GM13977 (cell line): ENCODE measurements at regions of chr9 and their contacts with region 1.

Region 1: DNA sequence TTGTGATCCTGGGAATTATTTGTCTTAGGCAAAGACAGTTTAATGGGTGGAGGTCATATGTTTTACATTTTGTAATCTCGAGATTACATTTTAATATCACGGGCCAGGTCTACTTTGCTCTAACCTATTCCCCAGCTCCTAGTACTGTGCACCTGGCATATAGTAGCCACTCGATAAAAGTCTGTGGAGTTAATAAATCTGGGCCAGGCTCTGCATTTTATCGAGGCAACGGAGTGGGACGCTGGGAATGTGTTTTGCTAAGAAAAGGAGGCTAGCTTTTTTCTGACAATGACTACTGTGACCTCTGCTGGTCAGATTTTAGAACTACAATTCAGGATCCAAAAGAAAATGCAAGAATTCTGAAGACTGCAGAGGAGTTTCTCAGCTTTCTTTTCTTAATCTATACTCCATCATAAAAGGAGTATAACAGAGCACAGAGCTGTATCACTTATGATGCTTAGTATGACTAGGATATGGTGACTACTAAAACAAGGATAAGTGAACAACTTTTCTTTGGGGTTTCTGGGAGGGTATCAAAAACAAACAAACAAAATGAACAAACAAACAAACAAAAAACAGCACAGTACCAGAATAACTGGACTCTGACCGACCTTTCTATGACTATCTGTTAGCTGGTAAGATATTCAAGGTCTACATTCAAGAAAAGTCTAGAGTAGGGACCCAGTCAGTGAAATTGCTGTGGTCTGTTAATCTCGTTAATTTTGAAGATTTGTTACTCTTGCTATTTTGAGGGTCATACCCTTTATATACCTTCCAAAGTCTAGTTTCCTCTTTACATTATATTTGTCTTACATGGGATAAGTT is 46.1 kb upstream of the CER1 start:
- DNase-seq: peak; percentile 39
- CTCF ChIP-seq: peak; percentile 69

Region 2: GRCh38 chr9:14451949-14452348 is 316.7 kb before region 1 on chr9:
- in situ Hi-C with region 1: loop called (anchors 25 kb)
- DNase-seq: peak; percentile 29
- CTCF ChIP-seq: no peak

Region 3: GRCh38 chr9:14616188-14616982 is 152.2 kb before region 1 on chr9:
- in situ Hi-C with region 1: loop called (anchors 10 kb)
- DNase-seq: peak; percentile 7
- CTCF ChIP-seq: peak; percentile 70